ENCODE measurements at regions of chr3 and their contacts with region 1.

Region 1: GRCh38 chr3:50568947-50569749 is at the start of gene HEMK1:
- DNase-seq: peak; percentile 97 to 99
- ATAC-seq: peak; percentile 86 to 90 (median 88)
- H3K4me3 ChIP-seq: peak within 1 kb of the TSS; percentile 81
- H3K27ac ChIP-seq: peak within 1 kb of the TSS; percentile 89
- H3K4me1 ChIP-seq: peaks cover 15% of the 10 kb centered on the region
- H3K27me3 ChIP-seq: no peaks in the 10 kb centered on the region
- CTCF ChIP-seq: no peak
- total RNA-seq, gene HEMK1: 6.1 to 16.2 (median 9.3) TPM

Region 2: GRCh38 chr3:50652709-50653108 is 83.6 kb after region 1 on chr3:
- intact Hi-C with region 1: loop called in 1 of 2 experiments (anchors 5 kb)
- DNase-seq: peak; percentile 47 to 80
- ATAC-seq: peak; percentile 60 to 71 (median 66)
- H3K4me3 ChIP-seq: no peak overlapping the region
- H3K27ac ChIP-seq: no peak overlapping the region
- H3K4me1 ChIP-seq: peaks cover 30% of the 10 kb centered on the region
- H3K27me3 ChIP-seq: no peaks in the 10 kb centered on the region
- CTCF ChIP-seq: peak; percentile 54

Region 3: DNA sequence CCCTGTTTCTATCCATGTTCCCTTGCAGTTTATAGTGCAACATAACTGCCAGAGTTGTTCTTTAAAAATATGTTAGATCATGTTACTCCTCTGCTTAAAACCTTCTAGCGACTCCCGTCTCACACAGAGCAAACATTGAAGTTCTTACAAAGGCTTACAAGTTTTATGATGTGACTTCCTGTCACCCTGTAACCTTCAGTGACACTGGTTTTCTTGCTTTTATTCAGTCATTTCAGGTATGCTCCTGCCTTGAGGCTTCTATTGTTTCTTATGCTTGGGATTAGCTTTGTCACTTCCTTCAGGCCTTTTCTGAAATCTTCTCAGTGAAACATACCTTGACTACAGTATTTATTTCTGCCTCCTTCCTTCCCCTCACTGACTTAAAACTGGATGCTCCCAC is 357.7 kb after region 1 on chr3:
- intact Hi-C with region 1: no loop called
- DNase-seq: no peak
- ATAC-seq: no peak
- H3K4me3 ChIP-seq: no peak overlapping the region
- H3K27ac ChIP-seq: no peak overlapping the region
- H3K4me1 ChIP-seq: no peaks in the 10 kb centered on the region
- H3K27me3 ChIP-seq: no peaks in the 10 kb centered on the region
- CTCF ChIP-seq: no peak